ENCODE measurements at regions of chr10 and their contacts with region 1.

Region 1: DNA sequence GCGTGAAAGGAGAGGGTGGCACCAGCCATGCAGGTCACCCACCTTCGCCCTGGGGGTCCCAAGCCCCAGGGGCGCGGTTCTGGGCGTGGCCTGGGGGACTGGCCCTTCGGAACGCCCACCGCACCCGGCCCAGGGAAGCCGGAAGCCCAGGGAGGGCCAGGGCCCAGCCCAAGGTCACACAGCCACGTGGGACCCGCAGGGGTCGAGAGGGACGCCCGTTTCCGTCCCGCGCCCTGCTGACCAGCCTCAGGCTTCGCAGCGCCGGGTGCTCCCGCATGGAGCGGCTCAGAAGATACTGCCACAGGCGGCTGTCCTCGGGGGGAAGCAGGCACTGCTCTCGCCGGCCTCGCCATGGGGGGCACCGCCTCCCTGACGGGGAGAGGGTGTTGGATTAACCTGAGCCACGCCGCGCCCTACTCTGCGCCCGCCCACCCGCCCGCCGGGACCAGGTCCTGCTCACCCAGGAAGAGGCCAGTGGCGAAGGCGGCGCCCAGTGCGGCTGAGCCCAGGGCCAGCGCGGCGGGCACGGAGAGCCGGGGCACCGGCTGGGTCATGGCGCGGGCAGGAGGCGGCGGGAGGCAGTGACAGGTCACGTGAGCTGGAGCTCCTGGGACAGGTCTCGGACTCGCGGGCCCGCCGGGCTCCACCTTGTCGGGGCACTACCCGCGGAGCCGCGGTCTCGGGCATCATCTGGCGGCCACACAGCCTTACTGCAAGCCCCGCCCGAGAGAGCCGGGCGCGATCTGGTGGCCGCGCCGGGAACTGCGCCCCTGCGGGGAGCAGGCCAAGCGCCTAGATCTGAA is at the start of gene COMTD1:
- DNase-seq: peak; percentile 83 to 86 (median 84)
- H3K4me3 ChIP-seq: peak within 1 kb of the TSS; percentile 64 to 87 (median 73)
- H3K4me3 Mint-ChIP-seq: peak within 1 kb of the TSS; percentile 84 to 86
- H3K27ac ChIP-seq: peak within 1 kb of the TSS in 1 of 2 donors; percentile 64
- H3K27ac Mint-ChIP-seq: peak within 1 kb of the TSS in 4 of 7 donors; percentile 45 to 75 (median 64)
- H3K4me1 ChIP-seq: peaks cover 16 to 25% of the 10 kb centered on the region in 2 donors
- H3K4me1 Mint-ChIP-seq: peaks cover 15% of the 10 kb centered on the region
- H3K27me3 ChIP-seq: no peaks in the 10 kb centered on the region
- H3K27me3 Mint-ChIP-seq: no peaks in the 10 kb centered on the region
- CTCF ChIP-seq: peak; percentile 100
- polyA plus RNA-seq, gene COMTD1: 15.6 to 16.5 (median 16.1) TPM

Region 2: DNA sequence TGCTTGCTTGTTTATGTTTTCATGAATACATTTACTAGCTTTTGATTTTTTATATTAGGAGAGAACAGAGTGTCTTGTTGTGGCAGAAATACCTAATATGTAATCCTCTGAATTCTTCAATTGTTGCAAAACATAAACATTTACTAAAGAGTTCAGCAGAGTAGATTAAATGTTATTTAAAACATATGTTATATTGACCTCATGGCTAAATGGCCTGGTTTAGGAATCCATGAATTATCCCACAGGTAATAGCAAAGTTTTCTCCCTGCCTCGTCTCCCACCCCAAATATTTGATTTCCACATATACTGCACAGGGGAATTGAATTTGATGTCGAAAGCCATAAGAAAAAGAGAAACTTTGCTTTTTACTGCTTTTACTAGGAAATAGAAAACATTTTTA is 972.7 kb before region 1 on chr10:
- intact Hi-C with region 1: loop called in 1 of 2 experiments (anchors 5 kb)
- DNase-seq: no peak
- H3K4me3 ChIP-seq: no peak overlapping the region
- H3K4me3 Mint-ChIP-seq: no peak overlapping the region
- H3K27ac ChIP-seq: no peak overlapping the region
- H3K27ac Mint-ChIP-seq: no peak overlapping the region
- H3K4me1 ChIP-seq: no peaks in the 10 kb centered on the region
- H3K4me1 Mint-ChIP-seq: peaks cover 6% of the 10 kb centered on the region
- H3K27me3 ChIP-seq: no peaks in the 10 kb centered on the region
- H3K27me3 Mint-ChIP-seq: peaks cover 0 to 2% (median 0%) of the 10 kb centered on the region in 3 donors
- CTCF ChIP-seq: no peak

Region 3: DNA sequence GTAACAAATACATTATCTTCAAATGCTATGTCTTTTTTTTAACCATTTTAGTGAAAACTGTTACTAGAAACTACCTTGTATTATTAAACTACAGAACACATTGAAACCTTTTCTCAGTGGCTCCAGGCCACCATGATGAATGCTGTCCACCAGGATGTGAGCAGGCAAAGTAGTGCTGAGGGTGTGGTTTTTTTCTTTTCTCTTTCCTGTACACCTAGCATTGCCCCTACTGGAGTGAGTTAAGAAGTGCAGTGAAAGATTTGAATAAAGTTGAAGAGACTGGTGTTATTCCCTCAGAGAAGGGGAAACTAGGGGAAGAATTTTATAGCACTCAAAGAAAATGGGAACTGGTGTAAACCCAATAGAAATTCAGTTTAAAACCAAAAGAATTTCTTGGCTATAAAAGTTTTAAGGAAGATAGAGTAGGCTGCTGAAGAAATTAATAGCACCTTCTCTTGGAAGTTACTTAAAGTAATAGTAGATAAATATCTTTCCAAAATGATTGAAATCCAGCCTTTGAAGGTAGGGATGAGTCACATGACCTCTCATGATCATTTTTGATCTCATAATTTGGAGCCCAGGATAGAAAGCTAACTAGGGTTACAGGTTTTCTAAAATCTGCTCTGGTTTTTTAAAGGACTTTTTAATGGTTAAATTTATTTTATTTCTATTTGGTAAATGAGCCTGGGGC is 244.0 kb before region 1 on chr10:
- intact Hi-C with region 1: no loop called
- DNase-seq: no peak
- H3K4me3 ChIP-seq: no peak overlapping the region
- H3K4me3 Mint-ChIP-seq: no peak overlapping the region
- H3K27ac ChIP-seq: no peak overlapping the region
- H3K27ac Mint-ChIP-seq: no peak overlapping the region
- H3K4me1 ChIP-seq: no peaks in the 10 kb centered on the region
- H3K4me1 Mint-ChIP-seq: no peaks in the 10 kb centered on the region
- H3K27me3 ChIP-seq: no peaks in the 10 kb centered on the region
- H3K27me3 Mint-ChIP-seq: no peaks in the 10 kb centered on the region
- CTCF ChIP-seq: no peak

Region 4: DNA sequence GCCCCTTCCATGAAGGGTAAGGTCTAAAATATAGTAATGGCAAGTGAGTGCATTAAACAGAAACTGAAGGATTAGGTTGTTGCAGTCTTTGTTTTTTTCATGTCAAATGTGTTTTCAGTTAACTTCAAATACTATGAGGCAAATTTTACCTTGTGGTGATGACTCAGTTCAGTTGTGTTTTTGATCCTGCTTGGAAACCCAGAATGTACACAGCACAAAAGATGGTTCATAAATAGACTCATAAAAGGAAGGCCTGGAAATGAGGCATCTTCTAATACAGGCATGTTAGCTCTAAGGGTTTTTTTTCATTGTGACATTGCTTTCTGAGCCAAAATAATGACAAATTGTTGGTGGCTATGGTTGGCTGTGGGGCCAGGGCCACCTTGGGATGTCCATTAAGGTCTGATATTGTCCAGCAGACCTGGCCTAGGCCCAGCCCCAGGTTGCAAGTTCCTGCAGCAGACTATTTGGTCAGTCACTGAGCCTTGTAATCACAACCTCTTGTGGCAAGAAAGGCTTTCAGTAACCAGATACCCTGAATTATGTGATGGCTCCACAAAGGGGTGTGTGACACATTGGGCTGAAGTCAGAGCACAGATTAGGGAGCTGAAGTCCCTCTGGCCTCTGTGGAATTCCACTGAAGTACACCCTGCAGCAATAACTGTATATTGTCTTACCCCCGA is 193.1 kb before region 1 on chr10:
- intact Hi-C with region 1: loop called in 1 of 2 experiments (anchors 10 kb)
- DNase-seq: no peak
- H3K4me3 ChIP-seq: no peak overlapping the region
- H3K4me3 Mint-ChIP-seq: no peak overlapping the region
- H3K27ac ChIP-seq: no peak overlapping the region
- H3K27ac Mint-ChIP-seq: peak overlapping the region in 1 of 7 donors; percentile 67
- H3K4me1 ChIP-seq: peaks cover 4 to 6% of the 10 kb centered on the region in 2 donors
- H3K4me1 Mint-ChIP-seq: peaks cover 13% of the 10 kb centered on the region
- H3K27me3 ChIP-seq: peaks cover 0 to 7% of the 10 kb centered on the region in 2 donors
- H3K27me3 Mint-ChIP-seq: peaks cover 7 to 13% (median 12%) of the 10 kb centered on the region in 3 donors
- CTCF ChIP-seq: no peak

Region 5: GRCh38 chr10:75187961-75188426 is 47.6 kb before region 1 on chr10:
- intact Hi-C with region 1: loop called (anchors 2 to 5 kb)
- DNase-seq: peak; percentile 45 to 62 (median 61)
- H3K4me3 ChIP-seq: no peak overlapping the region
- H3K4me3 Mint-ChIP-seq: no peak overlapping the region
- H3K27ac ChIP-seq: no peak overlapping the region
- H3K27ac Mint-ChIP-seq: peak overlapping the region in 4 of 7 donors; percentile 25 to 58 (median 46)
- H3K4me1 ChIP-seq: peaks cover 15 to 18% of the 10 kb centered on the region in 2 donors
- H3K4me1 Mint-ChIP-seq: peaks cover 19% of the 10 kb centered on the region
- H3K27me3 ChIP-seq: no peaks in the 10 kb centered on the region
- H3K27me3 Mint-ChIP-seq: peaks cover 0 to 1% (median 0%) of the 10 kb centered on the region in 3 donors
- CTCF ChIP-seq: peak; percentile 76

Region 6: GRCh38 chr10:75272896-75273295 is 37.3 kb after region 1 on chr10:
- intact Hi-C with region 1: no loop called
- DNase-seq: no peak
- H3K4me3 ChIP-seq: no peak overlapping the region
- H3K4me3 Mint-ChIP-seq: no peak overlapping the region
- H3K27ac ChIP-seq: no peak overlapping the region
- H3K27ac Mint-ChIP-seq: no peak overlapping the region
- H3K4me1 ChIP-seq: peaks cover 9 to 10% of the 10 kb centered on the region in 2 donors
- H3K4me1 Mint-ChIP-seq: peaks cover 15% of the 10 kb centered on the region
- H3K27me3 ChIP-seq: no peaks in the 10 kb centered on the region
- H3K27me3 Mint-ChIP-seq: peaks cover 0 to 11% (median 7%) of the 10 kb centered on the region in 3 donors
- CTCF ChIP-seq: no peak

Measured in CD14-positive monocyte (primary cell).